CD8-positive, alpha-beta T cell (primary cell): ENCODE measurements at regions of chr2 and their contacts with region 1.

Region 1: GRCh38 chr2:172465417-172466334 is 38.3 kb downstream of the ITGA6 start:
- DNase-seq: peak; percentile 47 to 86 (median 76)
- ATAC-seq: peak; percentile 49
- H3K4me3 ChIP-seq: no peak overlapping the region
- H3K4me3 Mint-ChIP-seq: peak overlapping the region; percentile 6
- H3K27ac ChIP-seq: peak overlapping the region; percentile 24 to 66
- H3K27ac Mint-ChIP-seq: peak overlapping the region; percentile 94
- H3K4me1 ChIP-seq: peaks cover 53% of the 10 kb centered on the region
- H3K4me1 Mint-ChIP-seq: peaks cover 74% of the 10 kb centered on the region
- H3K27me3 ChIP-seq: no peaks in the 10 kb centered on the region
- H3K27me3 Mint-ChIP-seq: no peaks in the 10 kb centered on the region
- CTCF ChIP-seq: peak; percentile 94

Region 2: DNA sequence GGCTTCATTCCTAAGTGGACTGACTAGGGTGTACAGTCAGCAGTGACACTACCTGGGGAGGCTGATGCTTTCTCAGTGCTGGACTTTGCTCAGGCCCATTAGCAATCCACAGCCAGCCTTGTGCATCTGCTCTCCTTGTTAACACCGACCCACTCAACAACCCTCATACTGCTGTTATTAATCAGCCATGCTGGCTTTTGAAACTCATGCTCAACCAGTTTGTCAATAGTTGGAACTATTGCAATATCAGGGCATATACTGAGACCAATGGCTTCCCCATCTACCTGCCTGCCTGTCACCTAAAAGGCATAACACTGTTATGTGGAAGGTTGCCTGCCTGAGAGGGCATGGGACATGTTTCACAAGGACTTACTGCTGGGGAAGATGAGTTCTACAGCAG is 1609.6 kb before region 1 on chr2:
- CTCF ChIA-PET with region 1: no interaction called
- POLR2A ChIA-PET with region 1: no interaction called
- intact Hi-C with region 1: no loop called
- DNase-seq: no peak
- ATAC-seq: no peak
- H3K4me3 ChIP-seq: no peak overlapping the region
- H3K4me3 Mint-ChIP-seq: no peak overlapping the region
- H3K27ac ChIP-seq: no peak overlapping the region
- H3K27ac Mint-ChIP-seq: no peak overlapping the region
- H3K4me1 ChIP-seq: no peaks in the 10 kb centered on the region
- H3K4me1 Mint-ChIP-seq: no peaks in the 10 kb centered on the region
- H3K27me3 ChIP-seq: no peaks in the 10 kb centered on the region
- H3K27me3 Mint-ChIP-seq: peaks cover 3% of the 10 kb centered on the region
- CTCF ChIP-seq: no peak

Region 3: GRCh38 chr2:171347591-171348032 is 1118.1 kb before region 1 on chr2:
- CTCF ChIA-PET with region 1: no interaction called
- POLR2A ChIA-PET with region 1: no interaction called
- intact Hi-C with region 1: no loop called
- DNase-seq: no peak
- ATAC-seq: no peak
- H3K4me3 ChIP-seq: no peak overlapping the region
- H3K4me3 Mint-ChIP-seq: no peak overlapping the region
- H3K27ac ChIP-seq: no peak overlapping the region
- H3K27ac Mint-ChIP-seq: peak overlapping the region; percentile 12
- H3K4me1 ChIP-seq: no peaks in the 10 kb centered on the region
- H3K4me1 Mint-ChIP-seq: peaks cover 3% of the 10 kb centered on the region
- H3K27me3 ChIP-seq: no peaks in the 10 kb centered on the region
- H3K27me3 Mint-ChIP-seq: no peaks in the 10 kb centered on the region
- CTCF ChIP-seq: no peak

Region 4: GRCh38 chr2:171703574-171704347 is 761.9 kb before region 1 on chr2:
- CTCF ChIA-PET with region 1: interaction called, 9 read pairs
- POLR2A ChIA-PET with region 1: interaction called, 3 read pairs
- intact Hi-C with region 1: loop called (anchors 1 to 2 kb)
- DNase-seq: peak in 2 of 9 experiments; percentile 47 to 59
- ATAC-seq: no peak
- H3K4me3 ChIP-seq: no peak overlapping the region
- H3K4me3 Mint-ChIP-seq: no peak overlapping the region
- H3K27ac ChIP-seq: no peak overlapping the region
- H3K27ac Mint-ChIP-seq: peak overlapping the region; percentile 15
- H3K4me1 ChIP-seq: no peaks in the 10 kb centered on the region
- H3K4me1 Mint-ChIP-seq: peaks cover 7% of the 10 kb centered on the region
- H3K27me3 ChIP-seq: no peaks in the 10 kb centered on the region
- H3K27me3 Mint-ChIP-seq: no peaks in the 10 kb centered on the region
- CTCF ChIP-seq: peak; percentile 54

Region 5: DNA sequence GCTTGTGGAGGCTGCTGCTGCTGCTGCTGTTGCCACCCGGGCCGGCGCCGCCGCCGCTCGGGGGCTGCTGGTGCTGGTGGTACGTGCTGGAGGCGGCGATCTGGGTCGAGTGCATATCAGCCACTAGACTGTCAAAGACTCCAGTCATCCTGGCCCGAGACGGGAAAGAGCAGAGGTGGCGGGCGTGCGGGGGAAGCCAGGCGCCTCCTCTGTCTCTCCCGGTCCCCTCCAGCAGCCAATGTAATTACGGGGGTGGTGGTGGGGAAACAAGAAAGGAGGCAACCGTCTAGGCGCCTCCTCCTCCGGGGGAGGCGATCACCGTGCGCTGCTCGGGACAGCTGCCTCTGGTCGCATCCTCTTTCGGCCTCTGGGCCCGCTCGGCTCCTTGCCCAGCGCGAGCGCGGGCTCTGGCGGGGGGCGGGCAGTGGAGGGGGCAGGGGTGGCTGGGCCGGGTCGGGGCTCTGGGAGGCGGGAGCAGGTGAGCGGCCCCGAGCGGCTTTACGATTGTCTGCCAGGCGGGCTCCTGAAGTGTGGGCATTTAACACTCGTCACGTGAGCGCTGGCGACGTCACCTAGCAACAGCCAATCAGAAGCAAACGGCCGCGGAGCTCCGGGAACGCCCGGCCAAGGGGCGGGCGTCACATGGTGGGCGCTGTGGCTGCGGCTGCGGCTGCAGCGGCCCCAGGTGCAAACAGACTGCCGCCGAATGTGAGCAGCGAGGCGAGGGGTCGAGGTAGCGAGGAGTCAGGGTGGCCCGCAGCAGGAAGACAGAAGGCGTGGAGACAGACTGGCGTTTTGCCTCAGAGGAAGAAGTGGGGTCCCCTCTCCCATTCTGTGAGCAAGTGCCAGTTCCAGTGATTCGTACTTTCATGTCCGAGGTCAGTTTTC is 363.0 kb before region 1 on chr2 and contains the start of gene DLX2:
- CTCF ChIA-PET with region 1: interaction called, 8 read pairs
- POLR2A ChIA-PET with region 1: interaction called, 3 read pairs
- intact Hi-C with region 1: loop called (anchors 2 to 5 kb)
- DNase-seq: peak in 8 of 9 experiments; percentile 42 to 85 (median 66)
- ATAC-seq: peak; percentile 24
- H3K4me3 ChIP-seq: peak within 1 kb of the TSS; percentile 46 to 57
- H3K4me3 Mint-ChIP-seq: peak within 1 kb of the TSS; percentile 80
- H3K27ac ChIP-seq: no peak within 1 kb of the TSS
- H3K27ac Mint-ChIP-seq: no peak within 1 kb of the TSS
- H3K4me1 ChIP-seq: peaks cover 76% of the 10 kb centered on the region
- H3K4me1 Mint-ChIP-seq: peaks cover 46% of the 10 kb centered on the region
- H3K27me3 ChIP-seq: peaks cover 86 to 89% of the 10 kb centered on the region in 2 experiments
- H3K27me3 Mint-ChIP-seq: peaks cover 62% of the 10 kb centered on the region
- CTCF ChIP-seq: no peak
- total RNA-seq, gene DLX2: 0.14 TPM in 1 of 2 experiments, not detected in the other

Region 6: DNA sequence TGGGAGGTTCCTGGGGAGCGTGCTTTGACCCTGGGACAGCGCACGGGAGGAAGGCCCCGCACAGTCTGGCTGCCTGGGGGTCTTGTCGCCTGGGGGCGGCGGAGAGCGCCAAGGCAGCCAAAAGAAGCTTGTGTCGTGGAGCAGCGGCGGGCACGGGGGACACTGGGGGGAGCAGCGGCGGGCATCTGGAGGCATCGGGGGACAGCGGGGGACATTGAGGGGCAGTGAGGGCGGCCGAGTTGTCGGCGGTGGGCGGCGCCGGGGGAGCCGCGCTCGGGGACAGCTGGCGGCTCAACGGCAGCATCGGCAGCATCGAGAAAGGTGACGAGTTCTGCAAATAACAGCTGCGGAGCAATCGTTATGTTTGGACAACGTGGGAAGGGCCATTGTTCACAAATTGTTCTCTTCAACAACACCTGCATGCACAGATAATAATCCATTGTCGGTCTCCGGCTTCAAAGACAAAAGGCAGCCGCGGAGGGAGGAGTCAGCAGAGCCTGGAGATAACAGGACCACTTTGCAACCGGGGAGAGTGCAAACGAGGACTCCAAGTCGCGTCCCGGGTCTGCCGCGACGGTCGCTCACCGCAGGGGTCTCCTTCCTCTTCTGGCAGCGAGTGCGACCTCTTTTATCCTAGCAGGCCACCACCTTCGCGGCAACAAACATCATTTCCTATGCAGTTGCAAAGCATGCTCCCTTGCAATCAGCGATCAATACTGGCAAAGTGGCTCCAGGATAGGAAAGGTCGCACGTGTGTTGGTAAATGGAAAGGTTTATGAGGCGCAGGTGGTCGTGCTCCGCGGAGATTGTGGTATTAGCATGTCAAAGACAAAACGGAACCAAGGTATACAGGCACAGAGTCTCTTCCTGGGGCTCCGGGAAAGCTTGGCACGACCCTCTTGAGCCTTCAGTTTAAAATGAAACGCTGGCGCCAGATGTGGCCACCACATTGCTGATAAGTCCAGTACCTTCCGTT is 230.7 kb before region 1 on chr2:
- CTCF ChIA-PET with region 1: interaction called, 11 read pairs
- POLR2A ChIA-PET with region 1: interaction called, 3 read pairs
- intact Hi-C with region 1: loop called in 1 of 2 experiments (anchors 2 kb)
- DNase-seq: peak in 7 of 9 experiments; percentile 30 to 68 (median 38)
- ATAC-seq: peak; percentile 62
- H3K4me3 ChIP-seq: peak overlapping the region; percentile 56 to 76
- H3K4me3 Mint-ChIP-seq: peak overlapping the region; percentile 83
- H3K27ac ChIP-seq: no peak overlapping the region
- H3K27ac Mint-ChIP-seq: no peak overlapping the region
- H3K4me1 ChIP-seq: no peaks in the 10 kb centered on the region
- H3K4me1 Mint-ChIP-seq: peaks cover 17% of the 10 kb centered on the region
- H3K27me3 ChIP-seq: peaks cover 0 to 10% of the 10 kb centered on the region in 2 experiments
- H3K27me3 Mint-ChIP-seq: peaks cover 18% of the 10 kb centered on the region
- CTCF ChIP-seq: no peak

Region 7: GRCh38 chr2:172427256-172427989 is 38.3 kb before region 1 on chr2 and contains the start of gene ITGA6:
- CTCF ChIA-PET with region 1: interaction called, 657 read pairs
- POLR2A ChIA-PET with region 1: interaction called, 150 read pairs
- intact Hi-C with region 1: loop called (anchors 1 kb)
- DNase-seq: peak; percentile 49 to 86 (median 74)
- ATAC-seq: peak; percentile 66
- H3K4me3 ChIP-seq: peak within 1 kb of the TSS; percentile 71 to 72
- H3K4me3 Mint-ChIP-seq: peak within 1 kb of the TSS; percentile 88
- H3K27ac ChIP-seq: peak within 1 kb of the TSS; percentile 43 to 73
- H3K27ac Mint-ChIP-seq: peak within 1 kb of the TSS; percentile 94
- H3K4me1 ChIP-seq: peaks cover 45% of the 10 kb centered on the region
- H3K4me1 Mint-ChIP-seq: peaks cover 59% of the 10 kb centered on the region
- H3K27me3 ChIP-seq: no peaks in the 10 kb centered on the region
- H3K27me3 Mint-ChIP-seq: no peaks in the 10 kb centered on the region
- CTCF ChIP-seq: no peak
- total RNA-seq, gene ITGA6: 50.5 to 52.1 TPM

Region 8: DNA sequence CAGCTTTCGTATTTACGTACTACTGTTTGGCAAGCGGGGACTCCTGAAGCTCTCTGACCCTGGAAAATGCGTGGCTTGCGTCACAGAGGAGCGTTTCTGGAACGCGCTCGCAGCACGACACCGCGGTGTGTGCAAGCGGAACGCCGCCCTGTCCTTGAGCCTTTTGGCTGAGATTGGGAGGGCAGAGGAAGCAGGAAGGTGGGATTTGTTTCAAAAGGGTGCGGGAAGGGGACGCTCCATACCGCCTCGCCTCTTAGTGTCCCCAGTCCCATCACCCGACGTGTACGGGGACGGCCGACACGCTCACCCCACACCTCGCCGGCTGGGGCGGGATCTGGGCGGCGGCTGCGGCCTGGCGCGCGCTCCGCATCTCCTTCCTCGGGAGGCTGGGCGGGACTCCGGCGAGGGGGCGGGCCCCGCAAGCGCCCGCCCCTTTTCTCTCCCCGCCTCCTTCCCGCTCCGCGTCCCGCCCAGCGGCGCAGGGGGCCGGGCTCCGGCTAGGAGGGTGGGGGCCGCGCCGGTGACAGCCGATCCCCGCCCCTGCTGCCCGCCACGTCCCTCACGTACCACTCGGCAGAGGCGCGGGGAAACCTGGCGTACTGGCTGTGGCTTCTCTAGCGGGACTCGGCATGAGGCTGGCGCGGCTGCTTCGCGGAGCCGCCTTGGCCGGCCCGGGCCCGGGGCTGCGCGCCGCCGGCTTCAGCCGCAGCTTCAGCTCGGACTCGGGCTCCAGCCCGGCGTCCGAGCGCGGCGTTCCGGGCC is 90.0 kb after region 1 on chr2 and contains the start of gene PDK1:
- CTCF ChIA-PET with region 1: interaction called, 11 read pairs
- POLR2A ChIA-PET with region 1: no interaction called
- intact Hi-C with region 1: no loop called
- DNase-seq: peak; percentile 81 to 95 (median 90)
- ATAC-seq: peak; percentile 92
- H3K4me3 ChIP-seq: peak within 1 kb of the TSS; percentile 77 to 98
- H3K4me3 Mint-ChIP-seq: peak within 1 kb of the TSS; percentile 94
- H3K27ac ChIP-seq: peak within 1 kb of the TSS; percentile 66 to 82
- H3K27ac Mint-ChIP-seq: peak within 1 kb of the TSS; percentile 86
- H3K4me1 ChIP-seq: peaks cover 33% of the 10 kb centered on the region
- H3K4me1 Mint-ChIP-seq: peaks cover 49% of the 10 kb centered on the region
- H3K27me3 ChIP-seq: no peaks in the 10 kb centered on the region
- H3K27me3 Mint-ChIP-seq: no peaks in the 10 kb centered on the region
- CTCF ChIP-seq: no peak
- total RNA-seq, gene PDK1: 34.1 to 36.6 TPM

Region 9: DNA sequence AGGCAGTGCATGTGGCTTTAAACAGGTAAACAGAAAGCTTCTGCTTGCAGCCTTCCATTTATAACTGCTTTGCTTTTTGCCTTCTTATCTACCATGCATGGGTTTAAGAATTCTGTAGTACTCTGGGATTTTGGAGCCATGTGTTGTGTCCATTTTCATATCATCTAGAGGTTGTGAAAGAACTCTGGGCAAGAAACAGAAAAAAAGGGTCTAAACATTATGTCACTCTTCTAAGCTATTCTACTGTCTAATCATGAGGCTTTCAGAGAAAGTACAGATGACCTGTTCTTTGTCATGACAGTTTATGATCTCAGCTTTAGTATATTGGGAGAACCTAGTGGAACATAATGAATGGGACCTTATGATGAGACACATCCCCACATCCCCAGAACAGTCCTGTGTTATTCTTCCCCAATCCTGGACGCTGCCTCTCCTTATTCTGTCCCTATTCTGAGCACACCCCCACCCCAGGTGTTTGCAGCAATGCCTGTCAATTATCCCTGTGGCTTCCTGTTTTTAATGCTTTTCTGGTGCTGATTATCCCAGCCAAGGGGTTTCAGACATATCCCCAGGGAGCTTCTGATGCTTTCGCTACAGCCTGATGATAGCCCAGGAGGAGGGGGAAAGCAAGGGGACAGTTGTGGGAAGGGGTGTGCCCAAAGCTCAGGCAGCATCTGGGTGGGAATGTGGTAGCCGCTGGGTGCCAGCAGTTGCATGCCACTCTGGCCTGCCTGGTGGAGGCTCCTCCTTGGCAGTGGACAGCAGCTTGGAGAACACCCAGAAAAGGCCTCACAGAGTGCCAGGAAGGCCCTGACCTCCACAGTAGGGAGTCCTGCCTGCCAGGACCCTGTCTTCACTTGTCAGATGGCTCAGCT is 440.5 kb after region 1 on chr2:
- CTCF ChIA-PET with region 1: no interaction called
- POLR2A ChIA-PET with region 1: no interaction called
- intact Hi-C with region 1: no loop called
- DNase-seq: no peak
- ATAC-seq: no peak
- H3K4me3 ChIP-seq: no peak overlapping the region
- H3K4me3 Mint-ChIP-seq: no peak overlapping the region
- H3K27ac ChIP-seq: no peak overlapping the region
- H3K27ac Mint-ChIP-seq: no peak overlapping the region
- H3K4me1 ChIP-seq: no peaks in the 10 kb centered on the region
- H3K4me1 Mint-ChIP-seq: peaks cover 6% of the 10 kb centered on the region
- H3K27me3 ChIP-seq: no peaks in the 10 kb centered on the region
- H3K27me3 Mint-ChIP-seq: no peaks in the 10 kb centered on the region
- CTCF ChIP-seq: no peak